ENCODE measurements at regions of chr19 and their contacts with region 1.

Region 1: GRCh38 chr19:1275260-1275975 is at the start of gene FAM174C:
- DNase-seq: peak; percentile 88 to 99 (median 95)
- ATAC-seq: peak; percentile 75
- H3K4me3 ChIP-seq: peak within 1 kb of the TSS; percentile 77 to 79
- H3K4me3 Mint-ChIP-seq: peak within 1 kb of the TSS; percentile 83
- H3K27ac ChIP-seq: peak within 1 kb of the TSS; percentile 84 to 94
- H3K27ac Mint-ChIP-seq: peak within 1 kb of the TSS; percentile 92
- H3K4me1 ChIP-seq: peaks cover 61% of the 10 kb centered on the region
- H3K4me1 Mint-ChIP-seq: peaks cover 52% of the 10 kb centered on the region
- H3K27me3 ChIP-seq: no peaks in the 10 kb centered on the region
- H3K27me3 Mint-ChIP-seq: no peaks in the 10 kb centered on the region
- CTCF ChIP-seq: no peak
- total RNA-seq, gene FAM174C: 36.2 to 37.4 TPM

Region 2: DNA sequence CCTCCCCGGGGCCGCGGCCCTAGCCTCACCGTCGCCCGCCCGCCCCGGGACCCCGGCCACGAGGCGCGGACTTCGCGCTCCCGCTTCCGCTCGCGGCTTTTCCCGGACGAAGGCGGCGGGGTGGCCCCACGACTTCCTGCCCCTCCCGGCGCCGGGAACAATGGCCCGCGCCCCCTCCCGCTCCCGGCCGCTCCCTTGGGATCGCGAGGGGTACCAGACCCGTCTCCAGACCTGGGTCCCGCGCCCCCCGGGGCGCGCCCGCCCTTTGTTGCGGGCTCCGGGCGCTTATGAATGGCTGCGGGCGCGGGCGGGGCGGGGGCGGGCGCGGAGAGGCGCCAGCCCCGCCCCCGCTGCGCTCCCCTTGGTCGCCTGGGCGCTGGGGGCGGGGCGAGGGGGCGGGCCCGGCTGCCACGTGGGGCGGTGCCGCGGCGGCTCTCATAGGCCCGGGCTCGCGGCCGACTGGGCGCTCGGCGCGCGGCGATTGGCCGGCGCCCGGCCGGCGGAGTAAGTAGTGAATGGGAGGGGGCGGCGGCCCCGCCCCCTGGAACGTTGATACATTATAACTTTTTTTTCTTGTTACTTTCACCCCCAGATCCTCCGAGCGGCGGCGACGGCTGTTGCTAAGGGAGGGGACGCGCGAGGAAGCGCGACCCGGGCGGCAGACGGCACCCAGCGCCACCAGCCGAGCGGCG is 26.0 kb before region 1 on chr19:
- CTCF ChIA-PET with region 1: interaction called, 48 read pairs
- POLR2A ChIA-PET with region 1: interaction called, 21 read pairs
- intact Hi-C with region 1: loop called in 1 of 2 experiments (anchors 1 kb)
- DNase-seq: peak; percentile 89 to 98 (median 95)
- ATAC-seq: peak; percentile 55
- H3K4me3 ChIP-seq: peak overlapping the region; percentile 86 to 88
- H3K4me3 Mint-ChIP-seq: peak overlapping the region; percentile 87
- H3K27ac ChIP-seq: peak overlapping the region; percentile 83 to 84
- H3K27ac Mint-ChIP-seq: peak overlapping the region; percentile 88
- H3K4me1 ChIP-seq: peaks cover 31% of the 10 kb centered on the region
- H3K4me1 Mint-ChIP-seq: peaks cover 10% of the 10 kb centered on the region
- H3K27me3 ChIP-seq: no peaks in the 10 kb centered on the region
- H3K27me3 Mint-ChIP-seq: no peaks in the 10 kb centered on the region
- CTCF ChIP-seq: no peak

Region 3: DNA sequence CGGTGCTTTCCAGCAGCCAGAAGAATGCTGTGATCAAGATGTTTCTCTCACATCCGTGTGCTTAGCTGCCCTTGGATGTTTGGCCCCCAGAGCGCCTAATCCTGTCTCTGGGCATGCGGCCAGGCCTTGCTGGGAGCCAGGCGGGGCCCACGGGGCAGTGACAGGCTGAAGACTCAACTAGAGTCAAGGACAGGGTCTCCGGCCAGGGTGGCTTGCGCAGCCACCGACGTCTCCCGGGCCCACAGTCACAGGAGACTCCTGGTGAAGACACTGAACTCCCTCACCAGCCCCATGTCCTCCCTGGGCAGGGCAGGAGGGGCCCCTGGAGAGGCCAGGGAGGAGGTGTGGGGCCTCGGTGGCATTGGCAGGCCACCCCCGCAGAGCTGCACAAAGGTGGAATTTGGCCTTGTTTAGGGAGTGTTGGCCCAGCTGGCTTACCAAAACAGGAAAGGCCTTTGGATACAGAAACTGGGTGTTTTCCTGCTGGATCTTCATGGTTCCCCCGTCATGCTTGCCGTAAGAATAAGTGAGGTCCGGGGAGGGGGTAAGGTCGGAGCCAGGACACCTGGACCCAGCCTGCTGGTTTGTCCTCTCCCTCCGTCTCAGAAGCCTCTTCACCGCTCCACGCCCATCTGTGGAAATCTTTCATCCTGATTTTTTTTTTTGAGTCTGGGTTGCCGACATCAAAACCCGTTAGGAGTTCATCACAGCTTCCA is 98.3 kb after region 1 on chr19:
- CTCF ChIA-PET with region 1: interaction called, 60 read pairs
- POLR2A ChIA-PET with region 1: no interaction called
- intact Hi-C with region 1: loop called in 1 of 2 experiments (anchors 1 kb)
- DNase-seq: peak in 1 of 9 experiments; percentile 15
- ATAC-seq: no peak
- H3K4me3 ChIP-seq: no peak overlapping the region
- H3K4me3 Mint-ChIP-seq: no peak overlapping the region
- H3K27ac ChIP-seq: no peak overlapping the region
- H3K27ac Mint-ChIP-seq: no peak overlapping the region
- H3K4me1 ChIP-seq: no peaks in the 10 kb centered on the region
- H3K4me1 Mint-ChIP-seq: no peaks in the 10 kb centered on the region
- H3K27me3 ChIP-seq: no peaks in the 10 kb centered on the region
- H3K27me3 Mint-ChIP-seq: no peaks in the 10 kb centered on the region
- CTCF ChIP-seq: no peak

Region 4: DNA sequence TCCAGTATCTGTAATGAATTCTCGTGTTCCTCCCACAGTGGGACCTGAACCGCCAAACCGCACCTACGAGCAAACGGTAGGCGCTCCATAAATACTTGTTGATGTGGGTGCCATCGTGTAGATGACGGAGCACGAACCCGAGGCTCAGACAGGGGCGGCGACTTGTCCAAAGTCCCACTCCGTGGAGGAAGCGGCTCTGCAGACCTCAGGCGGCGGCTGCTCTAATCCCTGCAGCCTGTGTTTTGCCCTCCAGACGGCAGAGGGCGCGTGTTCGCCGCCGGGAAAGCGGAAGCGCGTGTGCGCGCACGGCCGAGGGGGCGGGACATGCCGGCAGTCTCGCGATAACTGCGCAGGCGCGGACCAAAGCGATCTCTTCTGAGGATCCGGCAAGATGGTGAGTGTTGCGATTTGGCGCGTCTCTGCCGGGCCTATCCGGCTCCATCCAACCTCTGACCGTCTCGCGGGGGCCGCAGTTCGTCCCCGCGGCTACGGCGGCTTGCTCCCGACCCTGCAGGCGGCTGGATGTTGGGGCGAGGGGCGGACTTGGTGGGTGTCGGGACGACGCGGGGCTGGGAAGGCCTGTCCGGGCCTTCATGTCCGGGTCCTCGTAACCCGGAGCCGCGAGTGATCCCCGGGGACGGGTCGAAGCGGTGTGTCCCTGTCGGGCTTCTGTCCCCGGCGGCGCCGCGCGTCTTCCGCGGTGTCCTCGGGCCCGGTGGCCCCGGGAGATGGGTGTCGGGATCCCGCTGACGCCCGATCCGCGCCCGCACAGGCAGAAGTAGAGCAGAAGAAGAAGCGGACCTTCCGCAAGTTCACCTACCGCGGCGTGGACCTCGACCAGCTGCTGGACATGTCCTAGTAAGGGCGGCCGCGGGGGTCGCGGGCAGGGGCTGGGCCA is 162.9 kb after region 1 on chr19 and contains the start of gene RPS15:
- CTCF ChIA-PET with region 1: no interaction called
- POLR2A ChIA-PET with region 1: interaction called, 3 read pairs
- intact Hi-C with region 1: loop called in 1 of 2 experiments (anchors 1 kb)
- DNase-seq: peak; percentile 92 to 98 (median 96)
- ATAC-seq: peak; percentile 90
- H3K4me3 ChIP-seq: peak within 1 kb of the TSS; percentile 79 to 95
- H3K4me3 Mint-ChIP-seq: peak within 1 kb of the TSS; percentile 98
- H3K27ac ChIP-seq: peak within 1 kb of the TSS; percentile 82 to 93
- H3K27ac Mint-ChIP-seq: peak within 1 kb of the TSS; percentile 100
- H3K4me1 ChIP-seq: peaks cover 22% of the 10 kb centered on the region
- H3K4me1 Mint-ChIP-seq: peaks cover 21% of the 10 kb centered on the region
- H3K27me3 ChIP-seq: no peaks in the 10 kb centered on the region
- H3K27me3 Mint-ChIP-seq: no peaks in the 10 kb centered on the region
- CTCF ChIP-seq: peak; percentile 95
- total RNA-seq, gene RPS15: 2,066 to 2,071 TPM

Region 5: DNA sequence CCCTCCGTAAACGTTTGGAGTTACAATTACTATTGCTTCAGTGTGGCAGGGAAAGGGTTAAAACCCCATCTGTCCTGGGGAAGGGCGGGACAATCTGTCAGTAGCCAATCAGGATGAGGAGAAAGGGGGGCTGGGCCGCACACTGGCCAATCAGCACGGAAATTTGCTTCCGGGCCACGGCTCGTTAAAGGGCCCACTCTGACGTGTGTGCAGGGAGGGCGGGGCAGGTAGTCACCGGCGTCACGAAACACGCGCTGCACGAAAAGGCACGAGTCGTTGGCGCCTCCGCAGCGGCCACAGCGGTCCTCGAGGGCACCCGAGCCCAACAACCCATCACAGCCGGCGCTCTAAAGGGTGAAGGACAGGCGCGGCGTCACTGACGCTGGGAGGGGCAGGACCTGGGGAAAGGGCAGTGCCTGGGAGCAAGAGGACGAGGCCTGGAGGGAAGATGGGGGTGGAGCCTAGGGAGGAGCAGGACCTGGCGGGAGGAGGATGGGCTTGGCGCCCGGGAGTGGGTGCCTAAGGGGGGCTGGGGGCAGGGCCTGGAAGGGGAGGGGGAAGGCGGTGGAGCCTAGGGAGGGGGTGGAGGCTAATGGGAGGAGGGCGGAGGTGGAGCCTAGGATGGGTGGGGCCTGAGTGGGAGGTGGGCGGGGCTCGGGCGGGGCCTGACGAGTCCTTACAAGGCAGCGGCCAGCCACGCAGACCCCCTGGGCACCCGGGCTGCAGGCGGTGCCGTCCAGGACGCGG is 232.5 kb after region 1 on chr19:
- CTCF ChIA-PET with region 1: no interaction called
- POLR2A ChIA-PET with region 1: no interaction called
- intact Hi-C with region 1: loop called (anchors 5 to 10 kb)
- DNase-seq: peak; percentile 80 to 96 (median 92)
- ATAC-seq: peak; percentile 93
- H3K4me3 ChIP-seq: peak overlapping the region; percentile 44 to 54
- H3K4me3 Mint-ChIP-seq: peak overlapping the region; percentile 75
- H3K27ac ChIP-seq: peak overlapping the region; percentile 47 to 64
- H3K27ac Mint-ChIP-seq: peak overlapping the region; percentile 88
- H3K4me1 ChIP-seq: peaks cover 40% of the 10 kb centered on the region
- H3K4me1 Mint-ChIP-seq: peaks cover 22% of the 10 kb centered on the region
- H3K27me3 ChIP-seq: peaks cover 8 to 10% of the 10 kb centered on the region in 2 experiments
- H3K27me3 Mint-ChIP-seq: peaks cover 17% of the 10 kb centered on the region
- CTCF ChIP-seq: no peak

Region 6: GRCh38 chr19:2084993-2085720 is 809.7 kb after region 1 on chr19:
- CTCF ChIA-PET with region 1: no interaction called
- POLR2A ChIA-PET with region 1: no interaction called
- intact Hi-C with region 1: loop called in 1 of 2 experiments (anchors 10 kb)
- DNase-seq: peak; percentile 85 to 99 (median 94)
- ATAC-seq: peak; percentile 51
- H3K4me3 ChIP-seq: peak overlapping the region; percentile 73 to 82
- H3K4me3 Mint-ChIP-seq: peak overlapping the region; percentile 98
- H3K27ac ChIP-seq: peak overlapping the region; percentile 89 to 95
- H3K27ac Mint-ChIP-seq: peak overlapping the region; percentile 98
- H3K4me1 ChIP-seq: peaks cover 73% of the 10 kb centered on the region
- H3K4me1 Mint-ChIP-seq: peaks cover 76% of the 10 kb centered on the region
- H3K27me3 ChIP-seq: no peaks in the 10 kb centered on the region
- H3K27me3 Mint-ChIP-seq: no peaks in the 10 kb centered on the region
- CTCF ChIP-seq: no peak

Measured in CD8-positive, alpha-beta T cell (primary cell).